ENCODE measurements at regions of chr5 and their contacts with region 1.

Region 1: GRCh38 chr5:123344816-123345426 is 78.3 kb downstream of the CEP120 start:
- DNase-seq: peak; percentile 56
- H3K4me3 Mint-ChIP-seq: no peak overlapping the region
- H3K27ac Mint-ChIP-seq: no peak overlapping the region
- H3K4me1 Mint-ChIP-seq: no peaks in the 10 kb centered on the region
- H3K27me3 Mint-ChIP-seq: no peaks in the 10 kb centered on the region
- CTCF ChIP-seq: peak; percentile 66

Region 2: GRCh38 chr5:122500245-122501075 is 844.5 kb before region 1 on chr5:
- CTCF ChIA-PET with region 1: interaction called, 4 read pairs
- POLR2A ChIA-PET with region 1: no interaction called
- intact Hi-C with region 1: loop called (anchors 1 kb)
- DNase-seq: peak; percentile 76
- H3K4me3 Mint-ChIP-seq: peak overlapping the region; percentile 5
- H3K27ac Mint-ChIP-seq: peak overlapping the region; percentile 71
- H3K4me1 Mint-ChIP-seq: peaks cover 23% of the 10 kb centered on the region
- H3K27me3 Mint-ChIP-seq: no peaks in the 10 kb centered on the region
- CTCF ChIP-seq: peak; percentile 53

Region 3: DNA sequence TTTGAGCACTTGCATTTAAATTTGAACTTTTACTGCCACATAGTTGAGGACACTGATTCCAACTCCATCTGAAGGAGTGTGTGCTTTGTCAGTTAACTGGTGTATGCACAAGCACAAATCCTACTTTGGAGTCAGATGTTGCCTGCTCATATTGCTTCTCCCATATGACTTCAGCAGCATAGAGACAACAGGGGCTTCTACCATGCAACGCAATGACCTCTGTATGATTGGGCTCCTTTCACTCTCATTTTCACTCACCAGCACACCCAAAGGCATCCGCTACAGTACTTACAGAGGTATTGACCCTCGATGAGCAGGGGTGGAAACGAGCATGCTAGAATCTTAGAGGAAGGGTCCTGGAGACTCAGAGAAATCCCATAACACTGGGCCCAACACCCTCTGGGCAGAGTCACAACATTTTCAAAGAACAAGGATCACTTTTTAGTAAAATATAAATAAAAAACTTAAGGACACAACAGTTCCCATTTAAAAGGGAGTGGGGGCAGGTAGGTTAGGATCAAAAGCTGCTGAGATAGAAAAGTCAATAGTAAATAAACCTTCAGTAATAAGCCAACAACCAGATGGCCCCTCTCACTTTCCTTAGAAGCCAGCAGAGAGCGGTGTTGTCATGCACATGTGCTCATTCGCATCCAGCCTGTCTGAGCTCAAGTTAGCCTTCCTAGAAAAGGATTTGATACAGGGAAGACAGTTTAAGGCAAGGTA is 829.1 kb before region 1 on chr5:
- CTCF ChIA-PET with region 1: interaction called, 9 read pairs
- POLR2A ChIA-PET with region 1: interaction called, 3 read pairs
- intact Hi-C with region 1: loop called (anchors 1 kb)
- DNase-seq: peak; percentile 89
- H3K4me3 Mint-ChIP-seq: no peak overlapping the region
- H3K27ac Mint-ChIP-seq: no peak overlapping the region
- H3K4me1 Mint-ChIP-seq: no peaks in the 10 kb centered on the region
- H3K27me3 Mint-ChIP-seq: no peaks in the 10 kb centered on the region
- CTCF ChIP-seq: peak; percentile 94

Region 4: GRCh38 chr5:123036391-123037103 is 308.4 kb before region 1 on chr5 and contains the start of gene PPIC:
- CTCF ChIA-PET with region 1: interaction called, 4 read pairs
- POLR2A ChIA-PET with region 1: no interaction called
- intact Hi-C with region 1: loop called (anchors 1 kb)
- DNase-seq: peak; percentile 88
- H3K4me3 Mint-ChIP-seq: peak within 1 kb of the TSS; percentile 80
- H3K27ac Mint-ChIP-seq: peak within 1 kb of the TSS; percentile 86
- H3K4me1 Mint-ChIP-seq: peaks cover 38% of the 10 kb centered on the region
- H3K27me3 Mint-ChIP-seq: no peaks in the 10 kb centered on the region
- CTCF ChIP-seq: no peak
- total RNA-seq, gene PPIC: 45.3 and 65.0 TPM in 2 replicates

Region 5: DNA sequence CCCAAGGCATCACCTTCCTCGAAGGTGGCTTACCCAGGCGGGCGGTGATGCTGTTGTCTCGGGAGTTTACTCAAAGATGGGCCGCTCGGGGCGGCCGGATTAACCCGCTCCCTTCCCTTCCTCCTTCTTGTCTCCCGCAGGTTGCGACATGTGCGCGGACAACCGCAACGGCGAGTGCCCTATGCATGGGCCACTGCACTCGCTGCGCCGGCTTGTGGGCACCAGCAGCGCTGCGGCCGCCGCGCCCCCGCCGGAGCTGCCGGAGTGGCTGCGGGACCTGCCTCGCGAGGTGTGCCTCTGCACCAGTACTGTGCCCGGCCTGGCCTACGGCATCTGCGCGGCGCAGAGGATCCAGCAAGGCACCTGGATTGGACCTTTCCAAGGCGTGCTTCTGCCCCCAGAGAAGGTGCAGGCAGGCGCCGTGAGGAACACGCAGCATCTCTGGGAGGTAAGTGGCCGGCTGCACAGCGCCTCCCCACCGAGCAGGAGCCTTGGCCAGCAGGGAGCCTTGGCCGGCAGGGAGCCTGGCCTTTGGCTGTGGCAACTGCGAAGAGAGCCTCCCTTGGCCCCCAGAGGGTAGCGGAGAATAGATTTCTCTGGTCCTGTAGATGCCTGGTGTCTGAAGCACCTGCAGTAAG is 245.3 kb before region 1 on chr5:
- CTCF ChIA-PET with region 1: no interaction called
- POLR2A ChIA-PET with region 1: no interaction called
- intact Hi-C with region 1: loop called (anchors 2 kb)
- DNase-seq: peak; percentile 67
- H3K4me3 Mint-ChIP-seq: peak overlapping the region; percentile 67
- H3K27ac Mint-ChIP-seq: no peak overlapping the region
- H3K4me1 Mint-ChIP-seq: peaks cover 6% of the 10 kb centered on the region
- H3K27me3 Mint-ChIP-seq: peaks cover 2% of the 10 kb centered on the region
- CTCF ChIP-seq: no peak

Region 6: GRCh38 chr5:123209502-123210012 is 135.4 kb before region 1 on chr5:
- CTCF ChIA-PET with region 1: no interaction called
- POLR2A ChIA-PET with region 1: no interaction called
- intact Hi-C with region 1: no loop called
- DNase-seq: peak; percentile 93
- H3K4me3 Mint-ChIP-seq: no peak overlapping the region
- H3K27ac Mint-ChIP-seq: no peak overlapping the region
- H3K4me1 Mint-ChIP-seq: peaks cover 14% of the 10 kb centered on the region
- H3K27me3 Mint-ChIP-seq: no peaks in the 10 kb centered on the region
- CTCF ChIP-seq: no peak